ENCODE measurements at regions of chr1 and their contacts with region 1.

Region 1: DNA sequence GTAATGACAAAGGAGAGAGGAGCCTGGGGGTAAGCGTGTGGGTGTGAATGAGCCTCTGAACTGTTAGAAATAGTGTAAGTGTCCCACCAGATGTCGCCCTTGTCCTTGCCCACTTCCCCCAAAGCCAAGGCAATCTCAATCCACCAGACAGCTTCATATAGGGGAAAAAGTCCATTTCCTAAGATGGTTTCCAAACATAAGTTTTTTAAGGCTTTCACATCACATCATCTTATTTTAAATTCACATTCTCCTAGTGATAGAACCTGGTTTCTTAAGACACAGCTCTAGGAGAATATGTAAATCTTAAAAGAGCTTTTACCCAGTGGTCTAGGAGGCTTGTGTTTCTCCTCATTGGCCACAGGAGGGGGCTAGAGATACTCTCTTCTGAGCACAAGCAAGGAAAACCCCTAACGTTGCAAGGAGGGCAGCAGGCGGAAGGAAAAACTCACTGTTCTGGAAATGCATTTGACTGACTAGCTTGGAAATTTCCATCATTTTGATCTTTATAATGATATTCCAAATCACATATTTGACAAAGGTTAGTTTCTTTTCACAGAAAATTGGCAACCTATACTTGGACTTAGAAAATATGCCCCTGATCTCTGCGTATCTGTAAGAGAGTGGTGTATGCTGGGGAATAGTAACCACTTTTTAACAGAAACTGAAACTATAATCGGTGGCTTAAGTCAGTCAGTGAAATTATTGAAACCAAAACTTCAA is 51.9 kb upstream of the LPAR3 start:
- DNase-seq: peak; percentile 74
- H3K4me3 Mint-ChIP-seq: peak overlapping the region; percentile 73
- H3K27ac Mint-ChIP-seq: peak overlapping the region; percentile 73
- H3K4me1 Mint-ChIP-seq: peaks cover 15% of the 10 kb centered on the region
- H3K27me3 Mint-ChIP-seq: no peaks in the 10 kb centered on the region

Region 2: GRCh38 chr1:84973498-84974334 is 28.8 kb after region 1 on chr1:
- CTCF ChIA-PET with region 1: interaction called, 17 read pairs
- POLR2A ChIA-PET with region 1: interaction called, 11 read pairs
- DNase-seq: no peak
- H3K4me3 Mint-ChIP-seq: no peak overlapping the region
- H3K27ac Mint-ChIP-seq: peak overlapping the region; percentile 93
- H3K4me1 Mint-ChIP-seq: peaks cover 77% of the 10 kb centered on the region
- H3K27me3 Mint-ChIP-seq: no peaks in the 10 kb centered on the region

Region 3: GRCh38 chr1:85027242-85027983 is 82.5 kb after region 1 on chr1:
- CTCF ChIA-PET with region 1: interaction called, 101 read pairs
- POLR2A ChIA-PET with region 1: interaction called, 18 read pairs
- DNase-seq: peak; percentile 24
- H3K4me3 Mint-ChIP-seq: peak overlapping the region; percentile 5
- H3K27ac Mint-ChIP-seq: peak overlapping the region; percentile 17
- H3K4me1 Mint-ChIP-seq: peaks cover 9% of the 10 kb centered on the region
- H3K27me3 Mint-ChIP-seq: no peaks in the 10 kb centered on the region

Region 4: GRCh38 chr1:85240174-85240601 is 295.3 kb after region 1 on chr1:
- CTCF ChIA-PET with region 1: interaction called, 20 read pairs
- POLR2A ChIA-PET with region 1: interaction called, 4 read pairs
- DNase-seq: no peak
- H3K4me3 Mint-ChIP-seq: no peak overlapping the region
- H3K27ac Mint-ChIP-seq: no peak overlapping the region
- H3K4me1 Mint-ChIP-seq: peaks cover 13% of the 10 kb centered on the region
- H3K27me3 Mint-ChIP-seq: peaks cover 3% of the 10 kb centered on the region

Measured in activated CD4-positive, alpha-beta memory T cell treated with anti-CD3 and anti-CD28 coated beads, Interleukin-2, amount 10 ng/mL, durations not matched to agents 7 days and 5 days (primary cell).